Vagina (tissue), 2 donors: ENCODE measurements at regions of chr11 and their contacts with region 1.

Region 1: GRCh38 chr11:57741132-57742086 is at the start of gene SELENOH:
- DNase-seq: peak in 1 of 2 donors; percentile 98
- H3K4me3 ChIP-seq: peak within 1 kb of the TSS; percentile 71 to 88
- H3K27ac ChIP-seq: peak within 1 kb of the TSS; percentile 86
- H3K4me1 ChIP-seq: peaks cover 20% of the 10 kb centered on the region
- H3K27me3 ChIP-seq: no peaks in the 10 kb centered on the region
- CTCF ChIP-seq: no peak
- POLR2A ChIP-seq: peak in 1 of 2 donors; percentile 50
- total RNA-seq, gene SELENOH: 120 TPM

Region 2: GRCh38 chr11:57792060-57792541 is 50.7 kb after region 1 on chr11:
- intact Hi-C with region 1: loop called (anchors 10 kb)
- DNase-seq: no peak
- H3K4me3 ChIP-seq: no peak overlapping the region
- H3K27ac ChIP-seq: peak overlapping the region; percentile 59
- H3K4me1 ChIP-seq: peaks cover 79% of the 10 kb centered on the region
- H3K27me3 ChIP-seq: no peaks in the 10 kb centered on the region
- CTCF ChIP-seq: no peak
- POLR2A ChIP-seq: no peak